Breast epithelium (tissue), 4 donors: ENCODE measurements at regions of chr14 and their contacts with region 1.

Region 1: DNA sequence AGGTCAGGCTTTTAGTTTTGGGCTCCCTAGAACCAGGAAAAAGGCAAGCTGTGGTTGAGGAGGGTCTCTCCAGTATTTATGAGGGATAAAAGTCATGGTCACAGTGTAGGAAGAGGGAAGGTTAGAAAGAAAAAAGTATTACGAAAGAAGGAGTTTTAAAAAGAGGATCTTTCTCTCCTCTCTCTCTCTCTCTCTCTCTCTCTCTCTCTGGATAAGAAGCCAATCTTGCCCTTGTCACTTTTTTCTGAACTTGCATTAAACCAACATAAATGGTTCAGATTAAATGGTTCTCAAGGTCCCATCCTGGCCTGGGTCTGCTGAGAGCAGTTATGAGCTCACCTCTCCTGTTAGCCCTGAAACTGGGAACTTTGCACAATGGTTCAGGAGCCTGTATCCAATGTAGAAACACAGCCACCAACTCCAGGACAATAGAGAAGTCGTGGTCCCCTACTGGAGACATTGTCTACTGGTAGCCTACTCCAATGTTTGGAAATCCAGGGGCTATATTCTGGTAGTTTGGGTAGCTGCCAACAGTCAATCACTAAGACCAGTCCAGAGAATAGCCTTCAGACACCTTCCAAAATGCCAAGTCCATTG is 131.9 kb downstream of the DAD1 start:
- DNase-seq: no peak
- H3K4me3 ChIP-seq: no peak overlapping the region
- H3K27ac ChIP-seq: no peak overlapping the region
- H3K4me1 ChIP-seq: no peaks in the 10 kb centered on the region
- H3K27me3 ChIP-seq: no peaks in the 10 kb centered on the region
- CTCF ChIP-seq: no peak
- POLR2A ChIP-seq: no peak

Region 2: DNA sequence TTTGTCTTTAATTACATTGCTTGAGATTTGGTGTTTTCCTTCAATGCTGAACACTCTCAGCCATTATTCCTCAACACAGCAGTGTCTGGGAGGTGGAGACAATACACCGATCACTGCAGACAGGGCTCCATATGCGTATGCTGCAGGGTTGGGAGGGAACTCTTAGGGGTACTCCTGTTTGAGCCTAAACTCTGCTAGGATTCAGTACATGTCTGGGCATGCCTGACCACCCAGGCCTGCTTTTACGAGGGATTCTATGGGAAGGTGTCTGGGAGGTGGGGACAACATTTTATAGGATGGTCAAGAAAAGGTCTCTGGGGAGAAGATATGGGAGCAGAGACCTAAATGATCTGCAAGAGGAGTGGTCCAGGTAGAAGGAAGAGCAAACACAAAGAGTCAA is 1213.4 kb after region 1 on chr14:
- intact Hi-C with region 1: loop called (anchors 10 kb)
- DNase-seq: no peak
- H3K4me3 ChIP-seq: no peak overlapping the region
- H3K27ac ChIP-seq: no peak overlapping the region
- H3K4me1 ChIP-seq: no peaks in the 10 kb centered on the region
- H3K27me3 ChIP-seq: no peaks in the 10 kb centered on the region
- CTCF ChIP-seq: no peak
- POLR2A ChIP-seq: no peak